Activated CD4-positive, alpha-beta T cell treated with anti-CD3 and anti-CD28 coated beads, Interleukin-2, amount 10 ng/mL, durations not matched to agents 7 days and 5 days (primary cell): ENCODE measurements at regions of chr2 and their contacts with region 1.

Region 1: GRCh38 chr2:25867396-25868003 is 10.8 kb downstream of the ASXL2 start:
- DNase-seq: no peak
- H3K4me3 Mint-ChIP-seq: no peak overlapping the region
- H3K27ac Mint-ChIP-seq: no peak overlapping the region
- H3K4me1 Mint-ChIP-seq: peaks cover 8% of the 10 kb centered on the region
- H3K27me3 Mint-ChIP-seq: no peaks in the 10 kb centered on the region

Region 2: GRCh38 chr2:25572638-25573037 is 294.9 kb before region 1 on chr2:
- CTCF ChIA-PET with region 1: no interaction called
- POLR2A ChIA-PET with region 1: no interaction called
- DNase-seq: no peak
- H3K4me3 Mint-ChIP-seq: no peak overlapping the region
- H3K27ac Mint-ChIP-seq: no peak overlapping the region
- H3K4me1 Mint-ChIP-seq: no peaks in the 10 kb centered on the region
- H3K27me3 Mint-ChIP-seq: no peaks in the 10 kb centered on the region

Region 3: DNA sequence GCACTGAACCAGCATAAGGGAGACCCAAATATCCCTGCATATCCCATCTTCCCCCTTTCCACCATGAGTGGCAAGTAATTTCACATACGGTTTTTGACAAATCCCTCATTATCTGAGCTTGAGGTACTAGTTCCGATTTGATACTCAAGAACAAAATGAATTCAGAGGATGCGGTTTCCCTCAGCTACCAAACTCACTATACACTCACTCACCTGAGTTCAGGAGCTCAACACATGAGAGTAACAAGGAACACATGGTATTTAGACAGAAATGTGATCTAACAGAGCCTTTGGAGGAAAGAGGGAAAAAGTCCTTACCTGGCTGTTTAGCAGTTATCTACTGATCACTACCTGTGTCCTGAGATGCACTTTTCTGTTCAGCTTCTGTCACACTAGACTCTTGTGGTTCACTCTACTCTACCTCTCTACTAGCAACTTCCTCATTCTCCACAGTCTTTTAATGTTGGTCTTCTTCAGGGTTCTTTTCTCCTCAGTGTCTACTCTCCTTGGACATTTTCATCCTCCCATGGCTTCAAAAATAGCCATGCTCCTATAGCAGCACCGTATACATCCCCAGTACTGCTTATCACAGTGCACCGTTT is 14.4 kb before region 1 on chr2:
- CTCF ChIA-PET with region 1: interaction called, 13 read pairs
- POLR2A ChIA-PET with region 1: no interaction called
- DNase-seq: peak; percentile 19
- H3K4me3 Mint-ChIP-seq: no peak overlapping the region
- H3K27ac Mint-ChIP-seq: peak overlapping the region; percentile 1
- H3K4me1 Mint-ChIP-seq: peaks cover 39% of the 10 kb centered on the region
- H3K27me3 Mint-ChIP-seq: no peaks in the 10 kb centered on the region